Head of caudate nucleus (tissue), 42 donors: ENCODE measurements at regions of chr5 and their contacts with region 1.

Region 1: DNA sequence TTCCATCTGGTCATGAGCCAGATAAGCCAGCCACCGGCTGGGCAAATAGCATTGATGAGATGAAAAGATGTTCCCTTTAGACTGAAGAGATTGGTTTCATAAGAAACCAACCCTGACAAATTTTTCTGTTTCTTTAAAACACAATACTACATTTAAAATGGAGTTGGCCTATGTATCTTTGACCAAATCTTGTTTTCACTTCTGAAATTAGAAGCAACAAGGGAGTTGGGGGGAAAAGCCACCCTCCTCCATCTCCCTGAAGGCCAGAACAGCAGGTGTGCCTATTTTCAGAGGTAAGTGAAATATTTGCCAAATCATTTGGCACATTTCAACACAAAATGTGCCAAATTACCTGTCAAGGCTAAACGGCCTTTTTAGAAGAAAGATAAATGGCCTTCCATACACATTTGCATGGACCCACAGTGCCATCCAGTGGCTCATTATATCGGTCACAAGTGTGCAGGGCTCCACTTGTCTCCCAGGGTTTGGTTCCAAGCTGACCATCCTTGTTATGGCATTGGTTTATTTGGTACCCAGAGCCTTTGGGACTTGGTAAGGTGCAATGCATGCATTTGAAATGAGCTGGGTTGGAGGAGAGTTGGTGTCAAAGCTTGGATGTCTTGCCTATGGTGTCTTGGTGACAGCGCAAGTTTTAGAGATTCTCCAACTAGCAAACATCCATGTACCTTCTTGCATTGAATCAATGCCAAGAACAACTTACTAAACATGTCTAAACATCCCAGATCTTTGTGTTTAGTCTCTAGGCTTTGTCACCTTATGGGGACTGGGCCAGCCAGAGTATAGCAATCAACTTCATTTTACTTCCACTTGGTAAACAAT is 372.0 kb upstream of the KIF2A start:
- DNase-seq: peak in 41 of 42 donors; percentile 29 to 87 (median 71)

Region 2: GRCh38 chr5:60960591-60960990 is 973.4 kb before region 1 on chr5:
- intact Hi-C with region 1: loop called (anchors 5 kb)
- DNase-seq: peak in 1 of 42 donors; percentile 5